ENCODE measurements at regions of chr7 and their contacts with region 1.

Region 1: GRCh38 chr7:148838905-148839304 is 45.2 kb downstream of the EZH2 start:
- DNase-seq: no peak
- ATAC-seq: peak; percentile 42
- H3K4me3 Mint-ChIP-seq: no peak overlapping the region
- H3K27ac Mint-ChIP-seq: no peak overlapping the region
- H3K4me1 Mint-ChIP-seq: peaks cover 12% of the 10 kb centered on the region
- H3K27me3 Mint-ChIP-seq: no peaks in the 10 kb centered on the region
- CTCF ChIP-seq: no peak

Region 2: GRCh38 chr7:148815612-148816011 is 23.3 kb before region 1 on chr7:
- CTCF ChIA-PET with region 1: no interaction called
- POLR2A ChIA-PET with region 1: no interaction called
- intact Hi-C with region 1: loop called (anchors 1 kb)
- DNase-seq: no peak
- ATAC-seq: no peak
- H3K4me3 Mint-ChIP-seq: no peak overlapping the region
- H3K27ac Mint-ChIP-seq: no peak overlapping the region
- H3K4me1 Mint-ChIP-seq: peaks cover 29% of the 10 kb centered on the region
- H3K27me3 Mint-ChIP-seq: no peaks in the 10 kb centered on the region
- CTCF ChIP-seq: no peak

Region 3: DNA sequence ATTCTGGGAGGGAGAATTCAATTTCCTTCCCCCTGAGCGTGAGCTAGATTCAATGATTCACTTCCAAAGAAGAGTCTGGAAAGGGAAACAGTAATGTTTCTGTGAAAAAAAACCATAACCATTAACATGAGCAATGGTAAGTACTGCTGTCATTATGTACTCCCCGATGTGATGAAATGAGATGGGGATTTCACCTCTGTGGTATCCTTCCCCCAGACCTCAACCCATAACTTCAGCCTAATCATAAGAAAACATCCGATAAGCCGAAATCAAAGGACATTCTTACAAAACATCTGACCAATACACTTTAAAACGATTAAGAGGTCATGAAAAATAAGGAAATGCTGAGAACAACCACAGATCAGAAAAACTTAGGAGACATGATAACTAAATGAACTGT is 18.0 kb after region 1 on chr7:
- CTCF ChIA-PET with region 1: interaction called, 3 read pairs
- POLR2A ChIA-PET with region 1: interaction called, 13 read pairs
- intact Hi-C with region 1: no loop called
- DNase-seq: no peak
- ATAC-seq: no peak
- H3K4me3 Mint-ChIP-seq: no peak overlapping the region
- H3K27ac Mint-ChIP-seq: no peak overlapping the region
- H3K4me1 Mint-ChIP-seq: peaks cover 11% of the 10 kb centered on the region
- H3K27me3 Mint-ChIP-seq: no peaks in the 10 kb centered on the region
- CTCF ChIP-seq: no peak

Region 4: GRCh38 chr7:149147072-149147751 is 308.3 kb after region 1 on chr7 and contains the start of gene ZNF398:
- CTCF ChIA-PET with region 1: no interaction called
- POLR2A ChIA-PET with region 1: no interaction called
- intact Hi-C with region 1: no loop called
- DNase-seq: peak; percentile 87
- ATAC-seq: peak; percentile 84
- H3K4me3 Mint-ChIP-seq: peak within 1 kb of the TSS; percentile 91
- H3K27ac Mint-ChIP-seq: peak within 1 kb of the TSS; percentile 94
- H3K4me1 Mint-ChIP-seq: peaks cover 32% of the 10 kb centered on the region
- H3K27me3 Mint-ChIP-seq: no peaks in the 10 kb centered on the region
- CTCF ChIP-seq: no peak
- total RNA-seq, gene ZNF398: 15.1 and 17.3 TPM in 2 replicates

Region 5: DNA sequence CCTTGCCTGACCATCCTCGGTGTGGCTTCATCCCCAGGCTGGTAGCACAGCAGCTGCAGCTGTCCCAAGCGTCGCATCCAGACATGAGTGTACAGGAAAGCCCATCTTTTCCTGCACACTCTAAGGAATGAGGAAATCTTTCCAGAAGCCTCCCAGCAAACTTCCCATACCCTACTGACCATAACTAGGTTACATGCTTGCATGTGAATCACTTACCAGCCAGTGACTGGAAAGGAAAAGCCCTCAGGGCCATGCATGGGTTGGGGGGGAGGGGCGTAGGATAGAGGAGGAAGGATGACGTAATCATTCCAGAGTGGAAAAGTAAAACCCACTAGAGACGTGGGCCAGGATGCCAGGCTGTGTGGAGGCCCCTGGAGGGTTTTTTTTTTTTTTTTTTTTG is 381.6 kb after region 1 on chr7:
- CTCF ChIA-PET with region 1: no interaction called
- POLR2A ChIA-PET with region 1: no interaction called
- intact Hi-C with region 1: no loop called
- DNase-seq: no peak
- ATAC-seq: no peak
- H3K4me3 Mint-ChIP-seq: no peak overlapping the region
- H3K27ac Mint-ChIP-seq: no peak overlapping the region
- H3K4me1 Mint-ChIP-seq: no peaks in the 10 kb centered on the region
- H3K27me3 Mint-ChIP-seq: no peaks in the 10 kb centered on the region
- CTCF ChIP-seq: no peak

Region 6: GRCh38 chr7:149529136-149529718 is 690.3 kb after region 1 on chr7:
- CTCF ChIA-PET with region 1: no interaction called
- POLR2A ChIA-PET with region 1: no interaction called
- intact Hi-C with region 1: no loop called
- DNase-seq: no peak
- ATAC-seq: no peak
- H3K4me3 Mint-ChIP-seq: no peak overlapping the region
- H3K27ac Mint-ChIP-seq: no peak overlapping the region
- H3K4me1 Mint-ChIP-seq: no peaks in the 10 kb centered on the region
- H3K27me3 Mint-ChIP-seq: peaks cover 2% of the 10 kb centered on the region
- CTCF ChIP-seq: no peak